Heart left ventricle (tissue), 16 donors: ENCODE measurements at regions of chr17 and their contacts with region 1.

Region 1: GRCh38 chr17:18038861-18039534 is at the starts of genes ATPAF2 and GID4:
- DNase-seq: peak; percentile 99 to 100 (median 100)
- ATAC-seq: peak; percentile 97 to 99 (median 97)
- H3K4me3 ChIP-seq: peak within 1 kb of the TSS; percentile 72 to 95 (median 88)
- H3K27ac ChIP-seq: peak within 1 kb of the TSS; percentile 68 to 89 (median 75)
- H3K4me1 ChIP-seq: peaks cover 0 to 57% (median 32%) of the 10 kb centered on the region in 12 donors
- H3K27me3 ChIP-seq: no peaks in the 10 kb centered on the region
- CTCF ChIP-seq: no peak
- POLR2A ChIP-seq: peak in 1 of 2 donors; percentile 47
- total RNA-seq, gene ATPAF2: 25.6 to 46.2 (median 37.6) TPM
- total RNA-seq, gene GID4: 15.3 to 27.7 (median 18.2) TPM

Region 2: GRCh38 chr17:17812211-17813057 is 226.6 kb before region 1 on chr17:
- intact Hi-C with region 1: loop called in 5 of 10 experiments (anchors 5 to 10 kb)
- DNase-seq: peak; percentile 74 to 89 (median 77)
- ATAC-seq: peak; percentile 21 to 46 (median 40)
- H3K4me3 ChIP-seq: no peak overlapping the region
- H3K27ac ChIP-seq: peak overlapping the region in 6 of 12 donors; percentile 3 to 71 (median 21)
- H3K4me1 ChIP-seq: peaks cover 9 to 82% (median 30%) of the 10 kb centered on the region in 12 donors
- H3K27me3 ChIP-seq: no peaks in the 10 kb centered on the region
- CTCF ChIP-seq: peak in 11 of 12 donors; percentile 99 to 100 (median 100)
- POLR2A ChIP-seq: no peak

Region 3: GRCh38 chr17:17890773-17891759 is 147.9 kb before region 1 on chr17:
- intact Hi-C with region 1: loop called in 9 of 10 experiments (anchors 5 to 10 kb)
- DNase-seq: peak in 3 of 5 donors; percentile 49 to 64 (median 58)
- ATAC-seq: peak; percentile 58 to 74 (median 65)
- H3K4me3 ChIP-seq: no peak overlapping the region
- H3K27ac ChIP-seq: no peak overlapping the region
- H3K4me1 ChIP-seq: peaks cover 4 to 41% (median 21%) of the 10 kb centered on the region in 12 donors
- H3K27me3 ChIP-seq: no peaks in the 10 kb centered on the region
- CTCF ChIP-seq: peak; percentile 43 to 78 (median 62)
- POLR2A ChIP-seq: no peak

Region 4: GRCh38 chr17:17994271-17995069 is 44.5 kb before region 1 on chr17:
- intact Hi-C with region 1: loop called in 3 of 10 experiments (anchors 5 kb)
- DNase-seq: peak in 3 of 5 donors; percentile 32 to 62 (median 36)
- ATAC-seq: peak; percentile 55 to 83 (median 75)
- H3K4me3 ChIP-seq: no peak overlapping the region
- H3K27ac ChIP-seq: no peak overlapping the region
- H3K4me1 ChIP-seq: peaks cover 0 to 8% (median 0%) of the 10 kb centered on the region in 12 donors
- H3K27me3 ChIP-seq: no peaks in the 10 kb centered on the region
- CTCF ChIP-seq: peak in 11 of 12 donors; percentile 26 to 62 (median 46)
- POLR2A ChIP-seq: no peak

Region 5: GRCh38 chr17:18025945-18026776 is 12.8 kb before region 1 on chr17:
- intact Hi-C with region 1: no loop called
- DNase-seq: peak; percentile 49 to 80 (median 71)
- ATAC-seq: peak in 3 of 4 donors; percentile 75 to 87 (median 80)
- H3K4me3 ChIP-seq: no peak overlapping the region
- H3K27ac ChIP-seq: peak overlapping the region in 6 of 12 donors; percentile 19 to 91 (median 84)
- H3K4me1 ChIP-seq: peaks cover 0 to 42% (median 14%) of the 10 kb centered on the region in 12 donors
- H3K27me3 ChIP-seq: no peaks in the 10 kb centered on the region
- CTCF ChIP-seq: no peak
- POLR2A ChIP-seq: no peak